Naive thymus-derived CD4-positive, alpha-beta T cell (primary cell): ENCODE measurements at regions of chr3 and their contacts with region 1.

Region 1: DNA sequence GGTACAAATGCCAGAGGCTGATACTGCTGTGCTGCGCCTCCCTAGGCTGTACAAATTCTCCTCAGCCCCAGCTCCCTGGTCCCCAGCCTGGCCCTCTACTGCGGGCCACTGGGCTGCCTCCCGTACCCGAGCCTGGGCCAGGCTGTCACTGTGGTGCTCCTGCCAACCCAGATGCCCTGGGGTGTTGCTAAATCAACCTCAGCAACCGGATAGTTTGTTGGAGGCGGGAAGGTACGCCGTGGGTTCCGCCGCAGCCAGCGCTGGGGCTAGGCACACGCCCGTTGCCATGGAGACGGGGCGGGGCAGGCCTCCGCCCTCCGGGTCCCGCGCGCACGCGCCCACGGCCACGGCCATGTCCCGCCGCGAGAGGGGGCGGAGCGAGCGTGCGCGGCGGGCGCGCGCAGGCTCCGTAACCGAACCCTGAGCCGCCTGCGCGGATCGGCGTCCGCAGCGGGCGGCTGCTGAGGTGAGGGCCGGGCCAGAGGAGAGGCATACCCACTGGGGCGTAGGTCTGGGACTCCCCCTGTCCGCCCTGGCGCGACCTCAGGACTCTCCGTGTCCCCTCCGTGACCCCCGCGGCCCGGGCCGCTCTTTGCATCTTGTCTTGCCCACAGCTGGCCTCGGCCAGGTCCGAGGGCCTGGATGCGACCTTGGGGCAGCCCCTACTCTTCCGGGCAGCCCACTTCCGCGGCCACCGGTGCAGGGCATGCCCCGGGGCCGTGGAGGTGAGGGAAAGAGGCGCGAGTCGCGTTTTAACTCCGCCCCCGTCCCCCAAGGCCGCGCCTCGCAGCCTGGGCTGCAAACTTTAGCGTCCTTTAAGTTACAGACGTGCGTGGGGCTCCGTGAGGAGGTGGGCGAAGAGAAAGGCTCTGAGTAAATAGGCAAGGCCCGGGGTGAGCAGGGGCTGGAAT is at the start of gene TEX264:
- DNase-seq: peak; percentile 90 to 98 (median 95)
- ATAC-seq: peak; percentile 90
- H3K4me3 ChIP-seq: peak within 1 kb of the TSS; percentile 94
- H3K4me3 Mint-ChIP-seq: peak within 1 kb of the TSS; percentile 89 to 95 (median 92)
- H3K27ac ChIP-seq: peak within 1 kb of the TSS; percentile 85
- H3K27ac Mint-ChIP-seq: peak within 1 kb of the TSS; percentile 24 to 97 (median 93)
- H3K4me1 ChIP-seq: peaks cover 53 to 60% of the 10 kb centered on the region in 2 donors
- H3K4me1 Mint-ChIP-seq: peaks cover 59 to 82% (median 73%) of the 10 kb centered on the region in 7 donors
- H3K27me3 ChIP-seq: no peaks in the 10 kb centered on the region
- H3K27me3 Mint-ChIP-seq: no peaks in the 10 kb centered on the region
- total RNA-seq, gene TEX264: 34.4 to 65.0 (median 41.7) TPM

Region 2: GRCh38 chr3:50337191-50337841 is 1333.8 kb before region 1 on chr3:
- CTCF ChIA-PET with region 1: no interaction called
- POLR2A ChIA-PET with region 1: no interaction called
- intact Hi-C with region 1: loop called in 1 of 2 experiments (anchors 5 kb)
- DNase-seq: peak; percentile 83 to 98 (median 91)
- ATAC-seq: peak; percentile 88
- H3K4me3 ChIP-seq: peak overlapping the region; percentile 83
- H3K4me3 Mint-ChIP-seq: peak overlapping the region; percentile 92 to 97 (median 95)
- H3K27ac ChIP-seq: peak overlapping the region; percentile 92
- H3K27ac Mint-ChIP-seq: peak overlapping the region; percentile 92 to 97 (median 96)
- H3K4me1 ChIP-seq: peaks cover 43 to 58% of the 10 kb centered on the region in 2 donors
- H3K4me1 Mint-ChIP-seq: peaks cover 35 to 73% (median 68%) of the 10 kb centered on the region in 7 donors
- H3K27me3 ChIP-seq: no peaks in the 10 kb centered on the region
- H3K27me3 Mint-ChIP-seq: peaks cover 0 to 3% (median 0%) of the 10 kb centered on the region in 5 donors

Region 3: GRCh38 chr3:51391075-51391567 is 280.0 kb before region 1 on chr3 and contains the start of gene RBM15B:
- CTCF ChIA-PET with region 1: no interaction called
- POLR2A ChIA-PET with region 1: interaction called, 4 read pairs
- intact Hi-C with region 1: loop called in 1 of 2 experiments (anchors 1 kb)
- DNase-seq: peak; percentile 94 to 98 (median 96)
- ATAC-seq: peak; percentile 95
- H3K4me3 ChIP-seq: peak within 1 kb of the TSS; percentile 52
- H3K4me3 Mint-ChIP-seq: peak within 1 kb of the TSS; percentile 76 to 89 (median 83)
- H3K27ac ChIP-seq: peak within 1 kb of the TSS; percentile 90
- H3K27ac Mint-ChIP-seq: peak within 1 kb of the TSS; percentile 79 to 91 (median 88)
- H3K4me1 ChIP-seq: peaks cover 46 to 53% of the 10 kb centered on the region in 2 donors
- H3K4me1 Mint-ChIP-seq: peaks cover 35 to 75% (median 67%) of the 10 kb centered on the region in 7 donors
- H3K27me3 ChIP-seq: no peaks in the 10 kb centered on the region
- H3K27me3 Mint-ChIP-seq: no peaks in the 10 kb centered on the region
- total RNA-seq, gene RBM15B: 29.9 to 40.6 (median 31.3) TPM

Region 4: DNA sequence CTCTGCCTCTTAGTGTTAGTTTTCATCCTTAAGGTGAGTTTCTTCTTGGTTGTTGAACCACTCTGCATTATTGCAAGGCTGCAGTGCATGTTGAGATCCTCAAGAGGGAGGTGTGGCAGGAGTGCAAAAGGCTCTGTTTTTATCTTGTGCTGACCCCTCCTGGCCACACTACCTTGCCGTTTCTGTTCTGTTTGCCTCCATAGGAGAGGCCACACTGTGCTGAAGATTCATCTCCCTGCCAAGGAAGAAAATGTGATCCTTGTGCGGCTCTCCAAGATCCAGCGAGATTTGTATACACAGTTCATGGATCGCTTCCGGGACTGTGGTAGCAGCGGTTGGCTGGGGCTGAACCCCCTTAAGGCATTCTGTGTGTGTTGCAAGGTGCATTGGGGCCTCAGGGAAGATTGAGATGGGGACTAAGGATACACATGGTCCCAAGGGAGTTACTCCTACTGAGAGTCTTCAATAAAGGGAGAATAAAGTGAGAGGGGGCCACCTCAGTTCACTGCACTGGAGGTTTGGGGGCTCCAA is 33.1 kb before region 1 on chr3:
- CTCF ChIA-PET with region 1: interaction called, 19 read pairs
- POLR2A ChIA-PET with region 1: no interaction called
- intact Hi-C with region 1: loop called (anchors 1 kb)
- DNase-seq: peak in 6 of 9 donors; percentile 3 to 23 (median 15)
- ATAC-seq: peak; percentile 80
- H3K4me3 ChIP-seq: no peak overlapping the region
- H3K4me3 Mint-ChIP-seq: no peak overlapping the region
- H3K27ac ChIP-seq: no peak overlapping the region
- H3K27ac Mint-ChIP-seq: peak overlapping the region in 1 of 9 donors; percentile 36
- H3K4me1 ChIP-seq: no peaks in the 10 kb centered on the region
- H3K4me1 Mint-ChIP-seq: peaks cover 0 to 3% (median 0%) of the 10 kb centered on the region in 7 donors
- H3K27me3 ChIP-seq: no peaks in the 10 kb centered on the region
- H3K27me3 Mint-ChIP-seq: no peaks in the 10 kb centered on the region